Activated naive CD4-positive, alpha-beta T cell treated with anti-CD3 and anti-CD28 coated beads for 36 hours (primary cell): ENCODE measurements at regions of chr1 and their contacts with region 1.

Region 1: DNA sequence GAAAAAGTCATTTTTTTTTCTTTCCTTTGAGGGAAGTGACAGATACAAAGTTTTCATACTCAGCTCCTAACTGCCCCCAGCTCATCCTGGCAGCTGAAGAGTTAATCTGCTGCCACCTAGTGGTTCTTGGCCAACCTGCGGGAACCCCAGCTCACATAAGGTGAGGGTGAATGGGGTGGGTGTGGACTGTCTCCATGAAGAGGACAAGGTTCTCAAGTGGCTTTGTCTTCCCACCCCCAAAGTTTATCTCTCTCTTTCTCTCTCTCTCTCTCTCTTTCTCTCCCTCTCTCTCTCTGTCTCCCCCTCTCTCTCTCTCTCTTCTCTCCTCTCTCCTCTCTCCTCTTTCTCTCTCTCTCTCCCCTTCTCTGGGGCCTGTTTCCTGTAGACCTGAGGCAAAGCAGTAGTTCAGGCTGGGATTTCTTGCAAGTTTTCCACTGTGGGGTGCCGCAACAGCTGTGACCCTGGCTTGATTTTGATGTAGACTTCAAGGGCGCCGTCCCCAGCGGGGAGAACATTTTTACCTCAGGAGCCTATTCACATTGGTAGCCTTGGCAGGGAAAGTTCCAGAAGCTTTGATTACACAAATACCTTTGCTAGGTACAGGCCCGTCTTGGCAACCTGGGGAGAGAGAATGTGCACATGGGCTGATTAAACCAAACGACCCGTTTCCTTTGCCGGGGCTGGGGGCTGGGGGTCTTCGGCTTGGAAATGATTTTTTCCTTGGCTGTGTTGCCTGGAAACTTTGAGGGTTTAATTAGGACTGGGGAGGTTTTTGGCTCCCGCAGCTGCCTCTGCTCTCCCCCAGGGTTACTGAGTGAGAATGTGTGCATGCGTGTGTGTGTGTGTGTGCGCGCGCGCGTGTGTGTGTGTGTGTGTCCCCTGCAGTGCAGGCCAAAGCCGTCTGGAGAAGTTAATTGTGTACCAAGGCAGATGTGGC is 135.9 kb downstream of the TM2D1 start:
- DNase-seq: peak; percentile 79
- H3K4me3 Mint-ChIP-seq: no peak overlapping the region
- H3K27ac Mint-ChIP-seq: no peak overlapping the region
- H3K4me1 Mint-ChIP-seq: no peaks in the 10 kb centered on the region
- H3K27me3 Mint-ChIP-seq: peaks cover 4% of the 10 kb centered on the region

Region 2: DNA sequence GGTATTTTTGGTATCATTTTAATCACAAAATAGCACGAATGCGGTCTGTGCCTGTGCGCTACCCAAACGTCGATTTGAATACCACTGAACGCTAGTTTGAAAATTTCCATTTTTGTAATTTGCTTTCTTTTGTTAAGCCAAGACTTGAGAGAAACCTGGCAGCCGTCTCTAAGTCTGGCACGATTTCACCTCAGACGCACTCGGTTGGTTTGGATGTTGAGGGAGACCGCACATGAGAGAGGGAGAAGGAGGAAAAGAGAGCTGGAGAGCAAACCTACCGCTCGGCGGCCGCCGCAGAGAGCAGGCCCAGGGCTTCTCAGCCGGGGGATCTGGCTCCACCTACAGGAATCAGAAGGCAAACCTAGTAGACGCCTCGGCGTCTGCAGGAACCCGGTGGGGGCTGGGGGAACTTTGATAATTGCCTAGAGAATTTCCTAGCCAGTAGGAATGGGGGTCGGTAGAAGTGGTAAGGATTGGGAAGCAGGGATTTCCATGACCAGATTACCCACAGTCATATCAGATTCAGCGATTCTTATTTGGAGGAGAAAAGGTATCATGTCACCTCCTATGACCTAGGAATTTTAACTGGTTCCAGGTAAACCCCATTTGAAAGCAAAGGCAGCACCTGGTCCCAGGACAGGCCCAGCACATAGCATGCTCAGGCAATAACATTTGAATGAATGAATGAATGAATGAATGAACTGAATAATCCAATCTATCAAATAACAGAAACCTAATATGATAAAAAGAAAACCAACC is 52.8 kb after region 1 on chr1:
- CTCF ChIA-PET with region 1: interaction called, 18 read pairs
- intact Hi-C with region 1: loop called (anchors 1 kb)
- DNase-seq: peak; percentile 84
- H3K4me3 Mint-ChIP-seq: peak overlapping the region; percentile 68
- H3K27ac Mint-ChIP-seq: peak overlapping the region; percentile 38
- H3K4me1 Mint-ChIP-seq: peaks cover 10% of the 10 kb centered on the region
- H3K27me3 Mint-ChIP-seq: peaks cover 3% of the 10 kb centered on the region

Region 3: DNA sequence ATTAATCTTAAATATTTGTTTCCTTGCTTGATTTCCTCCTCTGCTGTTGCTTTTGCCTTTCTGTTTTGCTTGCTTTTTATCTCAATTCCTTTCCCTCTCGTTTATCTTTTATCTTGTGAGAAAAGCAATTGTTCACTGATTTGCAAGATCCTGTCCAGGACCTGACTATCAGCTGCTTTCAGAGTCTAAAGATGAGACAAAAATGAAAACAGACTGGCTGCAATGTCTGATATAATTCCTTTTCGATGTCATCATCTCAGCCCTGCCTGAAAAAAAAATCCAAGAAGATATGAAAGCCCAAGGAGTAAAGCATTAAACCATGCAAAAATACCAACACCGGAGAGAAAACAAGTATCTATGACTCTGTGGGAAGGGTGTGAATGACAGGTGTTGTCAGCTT is 378.7 kb after region 1 on chr1:
- CTCF ChIA-PET with region 1: no interaction called
- intact Hi-C with region 1: no loop called
- DNase-seq: no peak
- H3K4me3 Mint-ChIP-seq: no peak overlapping the region
- H3K27ac Mint-ChIP-seq: no peak overlapping the region
- H3K4me1 Mint-ChIP-seq: no peaks in the 10 kb centered on the region
- H3K27me3 Mint-ChIP-seq: no peaks in the 10 kb centered on the region

Region 4: DNA sequence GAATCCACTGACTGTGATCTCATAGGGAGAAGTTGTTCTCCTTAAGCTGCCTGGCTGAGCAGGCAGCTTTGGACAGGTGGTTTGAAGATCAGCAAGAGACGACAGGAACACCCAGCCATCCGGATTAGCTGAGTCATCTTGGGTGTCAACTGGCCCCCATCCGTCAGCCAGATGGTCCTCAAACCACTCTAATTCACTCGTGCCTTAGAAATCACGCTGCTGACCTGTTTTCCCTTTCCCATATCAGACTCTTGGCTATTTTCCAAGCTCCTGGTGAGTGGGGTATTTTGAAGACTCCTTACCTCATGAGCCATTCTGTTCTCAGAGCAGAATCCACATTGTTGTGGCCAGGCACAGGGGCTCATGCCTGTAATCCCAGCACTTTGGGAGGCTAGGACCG is 456.6 kb after region 1 on chr1:
- CTCF ChIA-PET with region 1: no interaction called
- intact Hi-C with region 1: no loop called
- DNase-seq: no peak
- H3K4me3 Mint-ChIP-seq: no peak overlapping the region
- H3K27ac Mint-ChIP-seq: no peak overlapping the region
- H3K4me1 Mint-ChIP-seq: no peaks in the 10 kb centered on the region
- H3K27me3 Mint-ChIP-seq: no peaks in the 10 kb centered on the region